Activated naive CD4-positive, alpha-beta T cell treated with anti-CD3 and anti-CD28 coated beads for 36 hours (primary cell): ENCODE measurements at regions of chr6 and their contacts with region 1.

Region 1: DNA sequence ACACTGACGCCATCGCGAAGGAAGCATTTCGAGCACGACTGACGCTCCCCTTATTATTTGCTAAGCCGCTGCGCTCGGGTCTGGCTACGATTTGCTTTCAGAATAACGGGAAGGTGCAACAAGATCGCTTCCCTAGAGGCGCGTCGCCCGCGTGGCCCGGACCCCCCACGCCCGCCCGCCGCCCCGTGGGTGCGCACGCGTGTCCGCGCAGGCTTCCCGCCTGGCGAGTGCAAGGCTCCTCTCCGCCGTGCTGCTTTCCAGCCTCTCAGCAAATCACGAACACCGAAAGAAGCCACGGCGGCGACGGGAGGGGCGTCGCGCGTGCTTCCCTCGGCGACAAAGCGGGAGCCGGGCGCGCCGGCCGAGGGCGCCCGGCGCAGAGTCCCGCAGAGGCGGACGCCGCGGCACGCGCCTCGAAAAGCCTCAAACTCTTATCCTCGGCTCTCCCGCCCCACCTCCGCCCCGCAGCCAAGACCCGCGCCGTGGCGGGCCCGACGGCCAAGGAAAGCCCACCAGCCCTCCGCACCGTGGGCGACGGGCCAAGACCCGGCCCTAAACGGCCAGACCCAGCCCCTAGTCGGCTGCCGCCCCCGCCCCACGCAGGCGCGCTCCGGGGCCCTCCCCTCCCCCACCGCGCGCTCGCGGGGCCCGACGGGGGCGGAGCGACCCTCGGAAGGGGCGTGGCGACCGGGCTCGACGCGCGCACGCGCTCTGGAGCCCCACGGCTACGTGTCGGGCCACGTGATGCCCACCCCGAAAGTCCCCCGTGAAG is 987 bp upstream of the QKI start:
- DNase-seq: peak; percentile 87
- H3K4me3 Mint-ChIP-seq: peak overlapping the region; percentile 84
- H3K27ac Mint-ChIP-seq: peak overlapping the region; percentile 86
- H3K4me1 Mint-ChIP-seq: peaks cover 19% of the 10 kb centered on the region
- H3K27me3 Mint-ChIP-seq: no peaks in the 10 kb centered on the region

Region 2: DNA sequence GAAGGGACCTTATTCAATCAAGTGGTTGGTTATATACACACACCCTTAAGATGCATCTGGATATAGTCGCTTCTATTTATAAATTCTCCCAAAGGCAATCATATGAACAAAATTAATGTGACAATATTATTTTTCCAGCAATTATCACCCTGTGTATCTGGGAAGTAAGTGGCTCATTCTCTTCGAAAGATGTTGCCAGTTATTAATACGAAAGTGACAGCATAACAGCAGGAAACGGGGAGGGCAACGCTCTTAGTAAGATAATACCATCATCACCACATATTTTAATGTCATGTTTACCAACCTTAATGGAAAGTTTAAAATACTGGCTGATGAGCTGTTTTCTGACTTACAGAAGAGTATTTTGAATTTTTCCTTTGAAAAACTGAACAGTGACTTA is 1442.5 kb before region 1 on chr6:
- CTCF ChIA-PET with region 1: no interaction called
- intact Hi-C with region 1: no loop called
- DNase-seq: no peak
- H3K4me3 Mint-ChIP-seq: no peak overlapping the region
- H3K27ac Mint-ChIP-seq: no peak overlapping the region
- H3K4me1 Mint-ChIP-seq: no peaks in the 10 kb centered on the region
- H3K27me3 Mint-ChIP-seq: no peaks in the 10 kb centered on the region

Region 3: DNA sequence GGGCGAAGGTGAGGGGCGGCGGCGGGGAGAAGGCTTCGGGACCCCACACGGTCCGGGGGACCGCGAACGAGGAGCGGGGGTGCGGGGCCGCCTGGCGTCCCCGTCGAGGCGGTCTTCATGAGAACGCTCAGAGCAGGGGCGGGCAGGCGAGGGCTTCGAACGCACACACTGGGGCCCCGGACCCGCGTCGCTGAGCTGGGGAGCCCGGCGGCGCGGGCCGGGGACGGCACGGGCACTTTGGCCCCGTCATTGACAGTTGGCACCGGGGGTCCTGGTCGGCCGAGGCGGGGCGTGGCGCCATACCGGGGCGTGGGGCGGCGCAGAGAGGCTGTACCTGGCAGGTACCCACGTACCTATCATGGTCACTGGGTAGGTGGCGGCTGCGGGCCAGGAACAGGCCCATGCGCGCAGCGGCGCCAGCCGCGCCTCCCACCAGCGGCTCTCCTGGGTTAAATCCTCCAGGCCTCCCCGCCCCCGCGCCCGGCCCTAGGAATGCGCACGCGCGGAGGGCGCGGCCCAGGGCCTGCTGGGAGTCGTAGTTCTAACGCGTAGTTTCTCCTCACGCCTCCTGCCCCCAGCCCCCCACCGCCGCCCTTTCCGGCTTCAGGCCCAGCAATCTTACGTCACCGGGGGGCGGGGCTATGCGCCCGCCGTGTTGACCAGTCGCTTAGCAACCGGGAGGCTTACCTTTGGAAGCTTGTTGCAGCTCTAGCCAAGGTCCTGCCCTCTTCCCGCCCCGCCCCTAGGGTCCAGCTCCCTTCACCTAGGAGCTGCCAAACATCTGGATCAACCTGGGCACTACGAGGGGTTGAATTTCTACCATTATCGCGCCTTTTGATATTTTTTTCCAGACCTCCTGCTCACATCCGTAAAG is 686.0 kb before region 1 on chr6 and contains the starts of genes PACRG and PRKN:
- CTCF ChIA-PET with region 1: no interaction called
- intact Hi-C with region 1: loop called (anchors 2 kb)
- DNase-seq: peak; percentile 97
- H3K4me3 Mint-ChIP-seq: peak within 1 kb of the TSS; percentile 84
- H3K27ac Mint-ChIP-seq: peak within 1 kb of the TSS; percentile 80
- H3K4me1 Mint-ChIP-seq: peaks cover 7% of the 10 kb centered on the region
- H3K27me3 Mint-ChIP-seq: no peaks in the 10 kb centered on the region
- total RNA-seq, gene PACRG: not detected
- total RNA-seq, gene PRKN: 0.33 to 0.72 TPM

Region 4: DNA sequence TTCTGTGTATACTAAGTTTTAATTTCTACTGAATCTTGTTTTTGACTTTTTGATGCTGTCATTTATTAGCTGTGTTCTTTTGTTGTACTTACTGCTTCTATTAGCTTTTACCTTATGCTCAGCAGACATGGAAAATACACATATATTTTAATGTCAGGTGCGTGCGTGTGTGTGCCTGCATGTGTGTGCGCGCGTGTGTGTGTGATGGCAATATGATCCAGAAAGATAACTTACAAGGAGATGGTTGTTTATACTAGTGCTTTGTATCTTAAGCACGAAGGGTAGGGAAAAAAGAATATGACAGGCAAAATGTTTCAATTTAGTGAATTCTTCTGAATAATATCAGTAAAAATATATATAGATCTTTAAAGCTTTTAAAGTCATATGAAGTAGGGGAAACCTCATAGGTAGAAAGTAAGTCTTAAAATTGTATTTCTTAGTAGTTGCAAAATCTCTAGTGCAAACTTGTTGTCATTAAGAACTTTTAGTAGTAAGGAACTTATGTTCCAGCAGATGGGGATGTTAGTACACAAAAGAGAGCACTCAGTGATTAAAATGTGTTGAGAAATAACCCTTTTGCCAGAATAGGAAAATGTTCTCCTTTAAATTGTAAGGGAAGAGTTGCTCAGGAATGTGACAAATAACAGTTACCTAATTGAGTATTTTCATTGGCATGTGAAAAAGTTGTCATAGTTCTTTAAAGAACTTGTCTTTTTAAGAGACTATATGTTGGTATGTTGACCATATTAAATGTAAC is 14.1 kb after region 1 on chr6:
- CTCF ChIA-PET with region 1: interaction called, 4 read pairs
- intact Hi-C with region 1: loop called (anchors 1 kb)
- DNase-seq: no peak
- H3K4me3 Mint-ChIP-seq: no peak overlapping the region
- H3K27ac Mint-ChIP-seq: no peak overlapping the region
- H3K4me1 Mint-ChIP-seq: peaks cover 41% of the 10 kb centered on the region
- H3K27me3 Mint-ChIP-seq: no peaks in the 10 kb centered on the region

Region 5: DNA sequence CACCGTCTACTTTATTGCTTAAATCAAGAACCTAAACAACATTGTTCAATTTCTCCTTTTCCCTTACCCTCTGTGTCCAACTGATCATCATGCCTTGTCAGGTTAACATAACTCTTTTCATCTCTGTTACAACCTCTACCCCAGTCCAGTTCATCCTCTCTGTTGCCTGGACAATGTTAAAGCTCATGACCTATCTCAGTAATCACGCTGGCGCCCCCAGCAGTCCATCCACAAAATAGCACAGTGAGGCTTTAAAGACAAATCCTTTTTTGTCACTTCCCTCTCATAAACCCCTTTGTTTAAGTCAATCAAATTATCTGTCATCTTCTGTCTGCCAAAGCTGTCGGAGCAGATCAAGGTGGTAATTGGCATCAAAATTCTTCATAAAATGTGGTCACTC is 141.1 kb after region 1 on chr6:
- CTCF ChIA-PET with region 1: interaction called, 12 read pairs
- intact Hi-C with region 1: loop called (anchors 1 kb)
- DNase-seq: peak; percentile 81
- H3K4me3 Mint-ChIP-seq: no peak overlapping the region
- H3K27ac Mint-ChIP-seq: no peak overlapping the region
- H3K4me1 Mint-ChIP-seq: peaks cover 7% of the 10 kb centered on the region
- H3K27me3 Mint-ChIP-seq: no peaks in the 10 kb centered on the region

Region 6: DNA sequence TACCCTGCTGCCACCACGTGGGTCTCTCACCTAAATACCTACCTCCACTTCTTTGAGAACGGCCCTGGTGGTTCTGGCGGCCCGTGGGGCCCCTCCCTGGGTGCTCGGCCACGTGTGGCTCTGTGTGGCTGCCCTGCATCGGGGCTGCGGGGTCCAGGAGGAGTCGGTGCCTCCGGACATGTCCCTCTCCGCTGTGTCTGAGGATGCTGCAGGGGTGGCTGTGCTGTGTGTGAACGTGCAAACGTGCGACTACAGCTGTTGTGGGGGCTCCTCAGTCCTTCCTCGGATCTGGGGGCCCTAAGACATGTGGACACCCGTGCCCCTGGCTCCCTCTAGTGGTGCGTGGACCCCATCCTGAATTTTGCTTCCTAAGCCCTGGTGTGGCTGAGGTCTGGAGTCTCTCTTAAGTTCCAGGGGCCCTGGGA is 692.8 kb after region 1 on chr6:
- CTCF ChIA-PET with region 1: no interaction called
- intact Hi-C with region 1: loop called (anchors 2 kb)
- DNase-seq: no peak
- H3K4me3 Mint-ChIP-seq: no peak overlapping the region
- H3K27ac Mint-ChIP-seq: no peak overlapping the region
- H3K4me1 Mint-ChIP-seq: peaks cover 3% of the 10 kb centered on the region
- H3K27me3 Mint-ChIP-seq: peaks cover 36% of the 10 kb centered on the region